SK-N-SH (cell line): ENCODE measurements at regions of chr12 and their contacts with region 1.

Region 1: DNA sequence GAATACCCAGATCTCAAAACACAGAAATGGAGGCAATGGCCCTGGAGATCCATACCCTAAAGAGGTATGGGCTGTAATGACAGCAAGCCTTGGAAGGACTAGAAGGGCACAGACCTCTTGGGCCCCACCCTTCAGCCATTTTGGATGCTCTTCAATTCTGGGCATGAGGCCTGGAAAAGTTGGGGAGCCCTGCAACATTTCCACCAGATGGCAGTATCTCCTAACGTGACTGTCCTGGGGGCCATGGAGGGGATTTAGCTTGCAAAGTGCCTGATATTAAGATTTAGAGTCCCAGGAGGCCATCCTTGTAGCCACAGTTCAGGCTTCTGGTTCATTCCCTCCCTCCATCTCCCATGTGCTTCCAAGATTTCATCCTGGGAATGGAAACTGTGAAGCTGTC is 30.2 kb downstream of the KCNA5 start:
- DNase-seq: peak; percentile 22
- H3K4me3 ChIP-seq: no peak overlapping the region
- H3K27ac ChIP-seq: no peak overlapping the region
- H3K4me1 ChIP-seq: peaks cover 0 to 9% of the 10 kb centered on the region in 2 experiments; a peak in 1 of 4 replicates
- H3K27me3 ChIP-seq: peaks cover 98% of the 10 kb centered on the region
- CTCF ChIP-seq: peak; percentile 56
- EP300 ChIP-seq: no peak
- RAD21 ChIP-seq: peak; percentile 48

Region 2: GRCh38 chr12:4743046-4743445 is 330.8 kb before region 1 on chr12:
- CTCF ChIA-PET with region 1: no interaction called
- POLR2A ChIA-PET with region 1: no interaction called
- DNase-seq: no peak
- H3K4me3 ChIP-seq: no peak overlapping the region
- H3K27ac ChIP-seq: no peak overlapping the region
- H3K4me1 ChIP-seq: no peaks in the 10 kb centered on the region
- H3K27me3 ChIP-seq: no peaks in the 10 kb centered on the region; the same call in 1 of the 2 replicates
- CTCF ChIP-seq: no peak
- EP300 ChIP-seq: no peak
- RAD21 ChIP-seq: no peak

Region 3: DNA sequence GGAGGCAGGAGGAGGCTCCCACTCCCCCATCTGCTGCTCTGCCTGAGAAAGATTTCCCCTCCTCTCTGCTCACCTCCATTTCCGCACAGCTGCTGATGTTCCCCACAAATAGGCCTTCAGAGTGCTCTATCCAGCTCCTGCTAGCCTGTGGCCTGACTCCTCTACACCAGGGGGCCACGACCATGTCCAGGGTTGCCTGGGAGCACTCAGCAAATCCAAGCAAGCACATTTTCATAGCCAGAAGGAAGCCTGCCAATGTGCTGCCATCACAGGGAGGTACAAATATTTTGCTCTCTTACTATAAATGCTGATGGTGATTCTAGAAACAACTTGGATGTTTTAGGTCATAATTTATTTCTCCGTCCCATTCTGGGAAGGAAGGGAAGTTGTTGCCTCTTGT is 12.9 kb before region 1 on chr12:
- CTCF ChIA-PET with region 1: interaction called, 11 read pairs
- POLR2A ChIA-PET with region 1: no interaction called
- DNase-seq: no peak
- H3K4me3 ChIP-seq: no peak overlapping the region
- H3K27ac ChIP-seq: no peak overlapping the region
- H3K4me1 ChIP-seq: no peaks in the 10 kb centered on the region
- H3K27me3 ChIP-seq: peaks cover 86% of the 10 kb centered on the region
- CTCF ChIP-seq: no peak
- EP300 ChIP-seq: no peak
- RAD21 ChIP-seq: no peak

Region 4: DNA sequence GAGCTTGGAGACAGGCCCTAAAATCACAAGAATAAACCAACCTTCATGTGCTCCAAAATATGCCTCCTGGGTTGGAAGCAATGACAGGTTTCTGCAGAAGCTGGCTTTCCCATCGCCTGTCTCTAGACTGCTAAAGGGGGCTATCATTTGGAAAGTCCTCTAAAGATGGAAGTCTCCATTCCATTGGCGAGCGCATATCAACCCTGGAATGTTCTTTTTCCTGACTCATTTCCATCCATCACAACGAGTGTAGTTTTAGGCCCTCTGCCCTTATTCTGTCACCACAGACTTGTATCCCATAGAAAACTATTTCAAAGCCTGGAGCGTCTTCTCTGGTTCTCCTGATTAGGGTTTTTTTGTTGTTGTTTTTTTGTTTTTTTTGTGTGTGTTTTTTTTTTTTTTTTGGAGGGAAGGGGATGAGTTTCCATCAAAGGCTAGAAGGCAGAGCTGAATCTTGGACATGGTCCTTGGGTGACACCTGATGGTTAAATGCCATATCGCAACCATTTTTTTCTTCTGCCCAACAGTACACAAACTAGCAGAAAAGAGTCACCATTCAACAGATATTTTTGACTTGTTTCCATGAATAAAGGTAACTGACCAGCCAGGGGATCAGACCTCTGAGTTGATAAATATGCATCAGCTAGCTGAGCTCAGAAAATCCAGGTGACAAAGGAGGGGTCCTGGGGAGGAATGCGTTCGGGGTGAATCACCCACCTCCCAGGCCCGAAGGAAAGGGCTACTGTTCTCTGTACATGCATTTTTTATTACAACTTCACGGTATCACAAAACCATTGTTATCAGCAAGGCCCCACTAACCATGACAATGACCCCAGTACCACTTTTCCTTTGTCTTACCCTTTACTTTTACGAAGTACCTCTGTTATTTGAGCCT is 10.3 kb after region 1 on chr12:
- CTCF ChIA-PET with region 1: interaction called, 82 read pairs
- POLR2A ChIA-PET with region 1: no interaction called
- DNase-seq: peak; percentile 66
- H3K4me3 ChIP-seq: peak overlapping the region in 1 of 2 experiments; percentile 4; a peak in 1 of 4 replicates
- H3K27ac ChIP-seq: no peak overlapping the region
- H3K4me1 ChIP-seq: peaks cover 0 to 18% of the 10 kb centered on the region in 2 experiments; a peak in 3 of 4 replicates
- H3K27me3 ChIP-seq: peaks cover 15% of the 10 kb centered on the region; the same call in 1 of the 2 replicates
- CTCF ChIP-seq: peak; percentile 79
- EP300 ChIP-seq: no peak
- RAD21 ChIP-seq: peak; percentile 86